ENCODE measurements at regions of chr17 and their contacts with region 1.

Region 1: GRCh38 chr17:6843241-6843880 is 11.8 kb upstream of the TEKT1 start:
- DNase-seq: no peak
- H3K4me3 Mint-ChIP-seq: no peak overlapping the region
- H3K27ac Mint-ChIP-seq: no peak overlapping the region
- H3K4me1 Mint-ChIP-seq: peaks cover 29% of the 10 kb centered on the region
- H3K27me3 Mint-ChIP-seq: peaks cover 41% of the 10 kb centered on the region

Region 2: DNA sequence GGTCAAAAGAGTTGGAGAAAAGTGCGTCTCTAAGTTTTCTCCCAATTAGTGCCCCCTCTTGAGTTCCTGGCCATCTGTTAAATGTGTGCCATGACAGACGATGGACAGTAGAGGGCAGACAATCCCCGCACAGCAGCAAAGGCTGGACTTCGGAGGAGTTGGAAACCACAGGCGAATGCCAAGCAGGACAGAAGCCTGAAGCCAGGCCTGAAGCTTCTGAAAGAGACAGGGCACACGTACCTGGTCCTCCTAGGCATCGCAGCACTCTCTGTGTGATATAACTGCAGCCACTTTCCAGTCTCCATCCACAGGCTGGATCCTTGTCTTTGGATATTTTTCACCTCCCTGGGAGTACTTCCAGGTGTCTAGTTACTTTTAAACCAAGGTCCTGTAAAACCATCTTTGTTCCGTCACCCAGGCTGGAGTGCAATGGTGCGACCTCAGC is 177.3 kb before region 1 on chr17:
- intact Hi-C with region 1: loop called (anchors 5 kb)
- DNase-seq: no peak
- H3K4me3 Mint-ChIP-seq: no peak overlapping the region
- H3K27ac Mint-ChIP-seq: no peak overlapping the region
- H3K4me1 Mint-ChIP-seq: peaks cover 14% of the 10 kb centered on the region
- H3K27me3 Mint-ChIP-seq: peaks cover 24% of the 10 kb centered on the region

Region 3: GRCh38 chr17:6753006-6753445 is 90.3 kb before region 1 on chr17:
- intact Hi-C with region 1: loop called (anchors 10 kb)
- DNase-seq: no peak
- H3K4me3 Mint-ChIP-seq: no peak overlapping the region
- H3K27ac Mint-ChIP-seq: no peak overlapping the region
- H3K4me1 Mint-ChIP-seq: peaks cover 38% of the 10 kb centered on the region
- H3K27me3 Mint-ChIP-seq: peaks cover 11% of the 10 kb centered on the region

Region 4: GRCh38 chr17:6894206-6894528 is 50.8 kb after region 1 on chr17:
- intact Hi-C with region 1: loop called (anchors 10 kb)
- DNase-seq: no peak
- H3K4me3 Mint-ChIP-seq: no peak overlapping the region
- H3K27ac Mint-ChIP-seq: no peak overlapping the region
- H3K4me1 Mint-ChIP-seq: no peaks in the 10 kb centered on the region
- H3K27me3 Mint-ChIP-seq: peaks cover 37% of the 10 kb centered on the region

Region 5: GRCh38 chr17:7004398-7005253 is 161.3 kb after region 1 on chr17:
- intact Hi-C with region 1: loop called (anchors 5 kb)
- DNase-seq: peak; percentile 32
- H3K4me3 Mint-ChIP-seq: no peak overlapping the region
- H3K27ac Mint-ChIP-seq: no peak overlapping the region
- H3K4me1 Mint-ChIP-seq: peaks cover 12% of the 10 kb centered on the region
- H3K27me3 Mint-ChIP-seq: no peaks in the 10 kb centered on the region